ENCODE measurements at regions of chr14 and their contacts with region 1.

Region 1: GRCh38 chr14:77053046-77053841 is 24.7 kb upstream of the IRF2BPL start:
- DNase-seq: peak; percentile 87 to 89 (median 89)
- H3K4me3 ChIP-seq: no peak overlapping the region
- H3K27ac ChIP-seq: no peak overlapping the region
- H3K4me1 ChIP-seq: peaks cover 0 to 22% (median 11%) of the 10 kb centered on the region in 4 experiments
- H3K27me3 ChIP-seq: no peaks in the 10 kb centered on the region

Region 2: GRCh38 chr14:76941946-76942805 is 111.1 kb before region 1 on chr14:
- CTCF ChIA-PET with region 1: interaction called, 15 read pairs
- POLR2A ChIA-PET with region 1: no interaction called
- DNase-seq: no peak
- H3K4me3 ChIP-seq: no peak overlapping the region
- H3K27ac ChIP-seq: no peak overlapping the region
- H3K4me1 ChIP-seq: peaks cover 0 to 13% (median 8%) of the 10 kb centered on the region in 4 experiments
- H3K27me3 ChIP-seq: no peaks in the 10 kb centered on the region

Region 3: GRCh38 chr14:76956316-76957090 is 96.7 kb before region 1 on chr14:
- CTCF ChIA-PET with region 1: interaction called, 20 read pairs
- POLR2A ChIA-PET with region 1: no interaction called
- DNase-seq: peak; percentile 93 to 97 (median 97)
- H3K4me3 ChIP-seq: peak overlapping the region in 6 of 7 experiments; percentile 36 to 72 (median 60)
- H3K27ac ChIP-seq: peak overlapping the region; percentile 19 to 70
- H3K4me1 ChIP-seq: peaks cover 2 to 75% (median 62%) of the 10 kb centered on the region in 4 experiments
- H3K27me3 ChIP-seq: no peaks in the 10 kb centered on the region

Region 4: DNA sequence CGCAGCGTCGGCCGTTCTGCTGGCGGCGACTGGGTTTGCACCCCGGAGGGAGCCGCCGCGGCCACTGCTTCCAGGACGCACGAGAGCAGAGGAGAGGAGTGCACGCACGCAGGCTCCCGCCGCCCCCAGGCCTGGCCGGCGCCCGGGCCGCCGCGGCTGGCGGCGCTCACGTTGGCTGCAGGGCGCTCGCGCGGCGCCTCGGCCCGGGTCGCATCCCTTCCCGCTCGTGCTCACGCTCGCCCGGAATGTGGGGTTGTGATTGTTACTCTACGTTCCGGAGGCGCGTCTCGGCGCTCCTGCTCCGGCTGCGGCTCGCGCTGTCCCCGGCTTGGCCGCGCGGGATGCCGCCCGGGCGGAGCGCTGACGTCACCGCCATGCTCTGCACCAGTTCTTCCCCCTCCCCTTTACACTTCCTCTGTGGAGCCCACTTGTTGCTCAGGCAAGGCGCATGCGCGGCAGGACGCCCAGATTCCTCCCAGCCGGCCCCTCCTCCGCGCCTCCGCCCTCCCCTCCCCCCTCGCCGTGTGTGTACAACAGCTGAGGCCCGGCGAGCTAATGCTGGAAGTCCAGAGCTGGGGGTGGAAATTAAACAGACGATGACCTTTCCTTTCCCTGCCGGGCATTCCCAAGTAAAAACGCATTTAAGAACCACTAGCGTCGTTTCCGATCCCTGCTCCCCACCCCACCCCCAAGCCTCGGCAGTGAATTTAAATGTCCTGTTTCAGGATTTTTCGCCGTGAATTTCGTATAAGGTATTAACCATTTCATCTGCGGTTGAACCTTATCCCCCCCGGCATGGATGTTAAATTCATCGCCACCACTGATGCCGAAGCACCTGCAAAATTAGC is 24.6 kb before region 1 on chr14 and contains the start of gene IRF2BPL:
- CTCF ChIA-PET with region 1: interaction called, 11 read pairs
- POLR2A ChIA-PET with region 1: no interaction called
- DNase-seq: peak; percentile 91 to 96 (median 96)
- H3K4me3 ChIP-seq: peak within 1 kb of the TSS; percentile 67 to 82 (median 76)
- H3K27ac ChIP-seq: peak within 1 kb of the TSS; percentile 66 to 85
- H3K4me1 ChIP-seq: peaks cover 2 to 74% (median 56%) of the 10 kb centered on the region in 4 experiments
- H3K27me3 ChIP-seq: no peaks in the 10 kb centered on the region

Region 5: GRCh38 chr14:77067632-77068514 is 14.6 kb after region 1 on chr14:
- CTCF ChIA-PET with region 1: interaction called, 50 read pairs
- POLR2A ChIA-PET with region 1: no interaction called
- DNase-seq: peak; percentile 48 to 66 (median 63)
- H3K4me3 ChIP-seq: no peak overlapping the region
- H3K27ac ChIP-seq: no peak overlapping the region
- H3K4me1 ChIP-seq: peaks cover 0 to 23% (median 9%) of the 10 kb centered on the region in 4 experiments
- H3K27me3 ChIP-seq: no peaks in the 10 kb centered on the region

Region 6: DNA sequence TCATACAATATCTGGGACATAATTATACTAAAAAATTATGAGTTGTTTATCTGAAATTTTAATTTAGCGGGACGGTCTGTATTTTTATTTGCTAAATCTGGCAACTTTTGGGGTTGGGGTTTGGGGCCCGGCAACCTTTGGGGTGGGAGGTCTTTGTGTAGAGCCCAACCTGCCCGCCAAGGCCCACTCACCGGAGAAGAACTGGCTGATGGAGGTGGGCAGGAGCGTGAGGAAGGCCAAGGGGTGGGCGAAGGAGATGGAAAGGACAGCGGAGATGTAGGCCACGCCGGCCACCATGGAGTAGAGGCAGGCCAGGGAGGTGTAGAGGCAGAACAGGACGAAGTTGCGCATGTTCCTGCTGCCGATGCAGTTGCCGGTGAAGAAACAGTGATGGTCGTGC is 85.8 kb after region 1 on chr14:
- CTCF ChIA-PET with region 1: no interaction called
- POLR2A ChIA-PET with region 1: no interaction called
- DNase-seq: no peak
- H3K4me3 ChIP-seq: no peak overlapping the region
- H3K27ac ChIP-seq: no peak overlapping the region
- H3K4me1 ChIP-seq: peaks cover 0 to 34% (median 30%) of the 10 kb centered on the region in 4 experiments
- H3K27me3 ChIP-seq: peaks cover 0 to 93% (median 61%) of the 10 kb centered on the region in 5 experiments

Measured in common myeloid progenitor, CD34-positive (primary cell).